Calu3 (cell line): ENCODE measurements at regions of chr16 and their contacts with region 1.

Region 1: DNA sequence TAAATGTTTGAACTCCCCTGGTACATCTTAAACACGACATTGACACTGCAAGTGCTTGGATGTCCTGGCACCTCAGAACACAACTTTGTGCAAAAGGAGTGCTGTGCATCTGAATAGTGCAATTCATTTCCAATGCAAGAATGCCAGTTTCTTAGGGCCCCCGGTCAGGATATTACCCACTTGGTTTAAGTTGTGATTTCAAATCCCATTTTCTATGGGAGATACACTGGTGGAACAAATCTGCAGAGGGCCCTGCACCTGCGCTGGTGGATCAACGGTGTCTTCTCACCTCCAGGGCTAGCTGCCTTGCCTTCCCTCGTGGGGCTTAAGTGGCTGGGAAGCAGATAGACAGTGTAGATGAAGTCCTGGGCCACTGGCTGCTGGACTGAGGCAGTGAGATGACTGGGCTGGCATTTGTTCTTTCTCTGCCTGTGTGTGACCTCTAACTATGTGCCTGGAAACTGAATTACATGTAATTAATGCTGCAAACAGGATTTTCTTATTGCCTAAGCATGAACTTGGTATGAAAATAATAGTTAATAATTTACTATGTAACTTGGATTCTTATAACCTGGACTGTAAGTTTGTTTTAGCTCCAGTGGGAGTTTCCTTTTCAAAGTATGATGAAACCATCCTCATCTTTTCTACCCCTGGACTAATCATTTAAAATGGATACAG is 20.9 kb downstream of the HAPSTR1 start:
- DNase-seq: no peak
- H3K4me3 Mint-ChIP-seq: peak overlapping the region; percentile 44
- H3K27ac Mint-ChIP-seq: peak overlapping the region; percentile 70
- H3K4me1 Mint-ChIP-seq: peaks cover 68% of the 10 kb centered on the region
- H3K27me3 Mint-ChIP-seq: no peaks in the 10 kb centered on the region
- CTCF ChIP-seq: no peak

Region 2: DNA sequence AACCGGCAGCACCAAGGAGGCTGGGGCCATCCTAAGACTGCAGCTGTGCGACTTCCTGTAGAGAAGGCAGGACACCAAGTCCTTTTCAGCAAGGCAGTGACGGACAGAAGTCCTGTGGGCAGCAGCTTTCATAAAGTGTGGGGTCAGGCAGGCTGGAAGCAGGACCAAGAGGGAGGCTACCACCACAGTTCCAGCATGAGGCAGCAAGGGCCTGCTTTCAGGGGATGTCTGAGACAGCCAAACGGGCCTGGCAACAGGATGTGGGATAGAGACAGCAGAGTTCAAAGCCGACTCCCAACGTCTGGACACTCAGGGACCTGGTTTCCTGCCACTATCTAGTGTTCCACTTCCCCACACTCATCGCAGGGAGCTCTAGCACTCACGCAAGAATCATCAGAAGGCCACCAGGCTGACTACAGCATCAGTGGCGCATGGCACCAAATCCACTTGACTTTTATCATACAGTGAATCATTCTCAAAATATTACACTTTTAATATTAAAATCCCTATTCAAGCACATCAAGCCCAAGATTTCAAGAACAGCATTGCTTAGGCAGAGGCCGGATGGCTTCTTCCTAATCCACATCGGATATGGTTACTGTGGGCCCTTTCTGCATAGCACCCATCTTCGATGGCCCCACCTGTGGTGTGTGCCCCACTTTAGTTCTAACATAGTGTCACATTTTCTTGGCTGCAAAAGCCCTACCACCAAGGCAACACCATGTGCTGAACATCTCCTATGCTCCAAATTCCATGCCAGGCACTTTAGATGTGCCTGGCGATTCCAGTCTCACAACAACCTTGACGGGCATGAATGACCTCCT is 153.7 kb before region 1 on chr16:
- CTCF ChIA-PET with region 1: no interaction called
- intact Hi-C with region 1: loop called (anchors 5 kb)
- DNase-seq: no peak
- H3K4me3 Mint-ChIP-seq: no peak overlapping the region
- H3K27ac Mint-ChIP-seq: no peak overlapping the region
- H3K4me1 Mint-ChIP-seq: peaks cover 66% of the 10 kb centered on the region
- H3K27me3 Mint-ChIP-seq: no peaks in the 10 kb centered on the region
- CTCF ChIP-seq: no peak

Region 3: DNA sequence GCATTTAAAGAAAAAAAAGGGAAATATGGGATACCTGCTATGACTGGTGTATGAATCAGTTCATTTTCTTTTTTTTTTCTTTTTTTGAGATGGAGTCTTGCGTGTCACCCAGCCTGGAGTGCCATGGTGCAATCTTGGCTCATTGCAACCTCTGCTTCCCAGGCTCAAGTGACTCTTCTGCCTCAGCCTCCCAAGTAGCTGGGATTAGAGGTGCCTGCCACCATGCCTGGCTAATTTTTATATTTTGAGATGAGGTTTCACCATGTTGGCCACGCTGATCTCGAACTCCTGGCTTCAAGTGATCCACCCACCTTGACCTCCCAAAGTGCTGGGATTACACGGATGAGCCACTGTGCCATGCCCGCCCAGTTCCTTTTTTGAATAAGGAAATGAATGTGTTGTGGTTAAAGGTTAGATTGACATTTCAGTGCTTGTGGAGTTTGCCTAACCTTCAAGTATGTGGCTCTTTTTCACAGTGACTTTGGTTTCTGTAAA is 13.1 kb before region 1 on chr16:
- CTCF ChIA-PET with region 1: interaction called, 4 read pairs
- intact Hi-C with region 1: loop called (anchors 2 kb)
- DNase-seq: no peak
- H3K4me3 Mint-ChIP-seq: no peak overlapping the region
- H3K27ac Mint-ChIP-seq: peak overlapping the region; percentile 64
- H3K4me1 Mint-ChIP-seq: peaks cover 94% of the 10 kb centered on the region
- H3K27me3 Mint-ChIP-seq: no peaks in the 10 kb centered on the region
- CTCF ChIP-seq: no peak

Region 4: GRCh38 chr16:9316615-9317014 is 204.3 kb after region 1 on chr16:
- CTCF ChIA-PET with region 1: no interaction called
- intact Hi-C with region 1: no loop called
- DNase-seq: peak; percentile 75
- H3K4me3 Mint-ChIP-seq: peak overlapping the region; percentile 8
- H3K27ac Mint-ChIP-seq: peak overlapping the region; percentile 24
- H3K4me1 Mint-ChIP-seq: peaks cover 19% of the 10 kb centered on the region
- H3K27me3 Mint-ChIP-seq: no peaks in the 10 kb centered on the region
- CTCF ChIP-seq: no peak